Activated T-helper 1 cell treated with anti-CD3 and anti-CD28 coated beads, Interleukin-12 subunit alpha, Interleukin-12 subunit beta, Interleukin-2, Interleukin-4 antibody, amounts not matched to agents 30 ng/mL and 10 ng/mL and 1 ng/mL, durations not matched to agents 14 hours and 24 hours and 36 hours (primary cell): ENCODE measurements at regions of chr1 and their contacts with region 1.

Region 1: GRCh38 chr1:109213785-109214468 is at the start of gene SARS1:
- DNase-seq: peak; percentile 88
- H3K4me3 Mint-ChIP-seq: peak within 1 kb of the TSS; percentile 94
- H3K27ac Mint-ChIP-seq: peak within 1 kb of the TSS; percentile 94
- H3K4me1 Mint-ChIP-seq: peaks cover 37% of the 10 kb centered on the region
- H3K27me3 Mint-ChIP-seq: peaks cover 3% of the 10 kb centered on the region
- total RNA-seq, gene SARS1: 147 and 154 TPM in 2 replicates

Region 2: DNA sequence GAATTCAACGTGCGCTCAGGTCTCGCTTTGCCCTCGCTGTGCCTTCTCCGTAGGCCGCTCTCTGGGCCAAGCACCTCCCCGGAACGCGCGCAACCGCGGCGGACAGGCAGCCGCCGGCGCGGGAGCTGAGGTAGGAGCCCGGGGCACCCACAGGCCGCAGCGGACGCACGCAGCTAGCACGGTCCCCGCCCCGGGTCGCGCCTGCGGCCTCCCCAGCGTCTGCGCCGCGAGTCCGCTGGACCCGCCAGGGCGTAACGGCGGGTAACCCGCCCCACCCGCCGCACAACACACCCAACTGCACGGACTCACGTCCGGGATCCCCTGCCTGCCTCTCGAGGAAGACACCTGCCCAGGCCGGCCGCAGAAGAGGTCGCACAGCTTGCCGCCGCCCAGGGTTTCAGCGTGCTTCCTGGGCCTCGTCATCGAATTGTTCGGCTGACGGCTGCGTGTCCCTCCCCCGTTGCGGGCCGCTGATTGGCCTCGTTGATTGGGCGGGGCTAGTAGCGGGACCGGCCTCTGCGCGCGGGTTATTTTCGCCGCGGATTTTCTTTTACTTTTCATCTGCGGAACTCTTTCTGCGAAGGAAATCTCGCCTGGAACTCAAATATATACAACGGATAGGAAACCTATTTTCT is 250.8 kb before region 1 on chr1 and contains the start of gene CLCC1:
- intact Hi-C with region 1: loop called (anchors 1 kb)
- DNase-seq: peak; percentile 93
- H3K4me3 Mint-ChIP-seq: peak within 1 kb of the TSS; percentile 89
- H3K27ac Mint-ChIP-seq: peak within 1 kb of the TSS; percentile 94
- H3K4me1 Mint-ChIP-seq: peaks cover 26% of the 10 kb centered on the region
- H3K27me3 Mint-ChIP-seq: peaks cover 4% of the 10 kb centered on the region
- total RNA-seq, gene CLCC1: 23.1 and 23.4 TPM in 2 replicates

Region 3: DNA sequence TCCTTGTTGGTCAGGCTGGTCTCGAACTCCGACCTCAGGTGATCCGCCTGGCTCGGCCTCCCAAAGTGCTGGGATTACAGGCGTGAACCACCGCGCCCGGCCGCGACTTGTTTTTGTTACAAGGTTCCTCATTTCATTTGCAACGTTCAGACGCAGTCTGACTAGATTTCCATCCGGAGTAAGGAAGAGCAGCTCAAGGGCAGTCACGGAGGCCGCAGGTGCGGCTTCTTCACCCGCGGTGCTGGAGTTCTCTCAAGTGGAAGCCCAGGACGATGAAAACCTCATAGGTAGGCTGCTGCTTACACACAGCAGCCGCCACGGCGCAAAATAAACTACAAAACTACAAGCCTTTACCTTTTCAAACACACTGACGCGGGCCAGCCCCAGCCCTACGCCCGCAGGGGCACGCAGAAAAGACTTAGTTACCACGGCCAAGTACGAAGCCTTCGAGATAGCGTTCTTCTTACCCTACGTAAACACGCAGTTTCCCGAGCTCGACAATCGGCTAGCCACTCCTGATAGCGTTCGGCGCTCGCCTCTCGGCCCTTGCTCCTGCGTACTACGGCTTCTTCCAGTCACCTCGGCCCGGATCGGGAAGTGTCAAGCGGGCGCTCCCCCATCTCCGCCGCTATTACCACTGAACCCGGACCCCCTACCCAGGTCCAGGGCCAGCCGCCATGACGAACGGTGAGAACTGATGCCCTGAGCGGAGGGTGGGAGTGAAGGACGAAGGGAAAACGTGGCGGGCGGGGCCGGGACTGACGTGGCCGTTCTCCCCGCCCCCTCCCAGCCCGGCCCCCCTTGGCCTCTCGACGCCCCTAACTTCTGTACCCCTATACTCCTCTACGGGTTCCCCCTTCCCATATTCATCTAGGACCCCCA is 123.5 kb before region 1 on chr1 and contains the start of gene TMEM167B:
- intact Hi-C with region 1: loop called (anchors 1 kb)
- DNase-seq: peak; percentile 84
- H3K4me3 Mint-ChIP-seq: peak within 1 kb of the TSS; percentile 92
- H3K27ac Mint-ChIP-seq: peak within 1 kb of the TSS; percentile 93
- H3K4me1 Mint-ChIP-seq: peaks cover 21% of the 10 kb centered on the region
- H3K27me3 Mint-ChIP-seq: peaks cover 2% of the 10 kb centered on the region
- total RNA-seq, gene TMEM167B: 26.2 and 27.6 TPM in 2 replicates

Region 4: GRCh38 chr1:109161858-109162606 is 51.9 kb before region 1 on chr1:
- intact Hi-C with region 1: loop called (anchors 1 kb)
- DNase-seq: peak; percentile 52
- H3K4me3 Mint-ChIP-seq: peak overlapping the region; percentile 47
- H3K27ac Mint-ChIP-seq: peak overlapping the region; percentile 71
- H3K4me1 Mint-ChIP-seq: peaks cover 30% of the 10 kb centered on the region
- H3K27me3 Mint-ChIP-seq: peaks cover 2% of the 10 kb centered on the region

Region 5: DNA sequence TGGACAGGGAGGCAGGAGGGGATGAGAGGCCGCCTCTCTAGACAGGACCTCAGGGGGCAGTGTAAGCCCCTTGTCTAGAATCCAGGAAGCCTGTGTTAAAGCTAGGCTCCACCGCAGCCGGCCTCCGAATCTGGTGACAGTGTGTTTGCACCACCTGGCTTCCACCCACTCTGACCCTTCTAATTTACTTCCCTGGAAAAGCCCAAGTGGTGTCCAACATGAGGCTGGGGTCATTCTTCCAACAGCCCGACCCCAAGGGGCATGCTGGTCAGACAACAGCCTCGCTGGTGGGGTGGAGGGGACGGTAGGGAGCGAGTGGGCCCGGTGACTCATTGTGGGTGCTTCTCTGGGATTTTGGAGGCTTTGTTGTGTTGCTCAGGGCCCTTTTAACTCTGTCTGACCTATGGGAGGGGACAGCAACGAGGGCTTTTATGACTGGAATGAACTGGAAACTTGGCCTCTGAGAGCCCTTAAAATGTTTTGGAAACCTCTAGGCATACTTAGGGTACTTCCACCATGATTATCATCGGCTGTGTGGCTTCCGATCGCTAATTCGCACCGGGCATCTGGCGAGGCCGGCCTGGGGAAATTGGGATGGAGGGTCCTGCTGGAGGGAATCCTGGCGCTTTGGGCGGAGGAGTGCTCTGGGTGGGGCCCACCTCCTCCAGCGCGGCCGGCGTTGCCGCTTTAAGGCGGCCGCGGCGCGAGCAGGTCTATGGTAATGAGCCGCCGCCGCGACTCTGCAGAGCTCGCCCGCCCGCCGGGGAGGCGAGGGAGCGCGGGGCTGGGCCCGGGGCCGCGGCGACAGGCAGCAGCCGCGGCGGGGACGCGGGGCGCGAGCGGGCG is 35.1 kb after region 1 on chr1 and contains the start of gene CELSR2:
- intact Hi-C with region 1: loop called (anchors 5 kb)
- DNase-seq: peak; percentile 67
- H3K4me3 Mint-ChIP-seq: peak within 1 kb of the TSS; percentile 72
- H3K27ac Mint-ChIP-seq: no peak within 1 kb of the TSS
- H3K4me1 Mint-ChIP-seq: peaks cover 6% of the 10 kb centered on the region
- H3K27me3 Mint-ChIP-seq: peaks cover 14% of the 10 kb centered on the region
- total RNA-seq, gene CELSR2: 4.1 and 4.9 TPM in 2 replicates

Region 6: DNA sequence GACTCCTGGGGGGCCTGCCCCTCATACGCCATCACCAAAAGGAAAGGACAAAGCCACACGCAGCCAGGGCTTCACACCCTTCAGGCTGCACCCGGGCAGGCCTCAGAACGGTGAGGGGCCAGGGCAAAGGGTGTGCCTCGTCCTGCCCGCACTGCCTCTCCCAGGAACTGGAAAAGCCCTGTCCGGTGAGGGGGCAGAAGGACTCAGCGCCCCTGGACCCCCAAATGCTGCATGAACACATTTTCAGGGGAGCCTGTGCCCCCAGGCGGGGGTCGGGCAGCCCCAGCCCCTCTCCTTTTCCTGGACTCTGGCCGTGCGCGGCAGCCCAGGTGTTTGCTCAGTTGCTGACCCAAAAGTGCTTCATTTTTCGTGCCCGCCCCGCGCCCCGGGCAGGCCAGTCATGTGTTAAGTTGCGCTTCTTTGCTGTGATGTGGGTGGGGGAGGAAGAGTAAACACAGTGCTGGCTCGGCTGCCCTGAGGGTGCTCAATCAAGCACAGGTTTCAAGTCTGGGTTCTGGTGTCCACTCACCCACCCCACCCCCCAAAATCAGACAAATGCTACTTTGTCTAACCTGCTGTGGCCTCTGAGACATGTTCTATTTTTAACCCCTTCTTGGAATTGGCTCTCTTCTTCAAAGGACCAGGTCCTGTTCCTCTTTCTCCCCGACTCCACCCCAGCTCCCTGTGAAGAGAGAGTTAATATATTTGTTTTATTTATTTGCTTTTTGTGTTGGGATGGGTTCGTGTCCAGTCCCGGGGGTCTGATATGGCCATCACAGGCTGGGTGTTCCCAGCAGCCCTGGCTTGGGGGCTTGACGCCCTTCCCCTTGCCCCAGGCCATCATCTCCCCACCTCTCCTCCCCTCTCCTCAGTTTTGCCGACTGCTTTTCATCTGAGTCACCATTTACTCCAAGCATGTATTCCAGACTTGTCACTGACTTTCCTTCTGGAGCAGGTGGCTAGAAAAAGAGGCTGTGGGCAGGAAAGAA is 60.9 kb after region 1 on chr1:
- intact Hi-C with region 1: no loop called
- DNase-seq: no peak
- H3K4me3 Mint-ChIP-seq: no peak overlapping the region
- H3K27ac Mint-ChIP-seq: no peak overlapping the region
- H3K4me1 Mint-ChIP-seq: no peaks in the 10 kb centered on the region
- H3K27me3 Mint-ChIP-seq: no peaks in the 10 kb centered on the region

Region 7: GRCh38 chr1:109341944-109342930 is 128.3 kb after region 1 on chr1:
- intact Hi-C with region 1: no loop called
- DNase-seq: no peak
- H3K4me3 Mint-ChIP-seq: no peak overlapping the region
- H3K27ac Mint-ChIP-seq: no peak overlapping the region
- H3K4me1 Mint-ChIP-seq: peaks cover 6% of the 10 kb centered on the region
- H3K27me3 Mint-ChIP-seq: peaks cover 11% of the 10 kb centered on the region

Region 8: DNA sequence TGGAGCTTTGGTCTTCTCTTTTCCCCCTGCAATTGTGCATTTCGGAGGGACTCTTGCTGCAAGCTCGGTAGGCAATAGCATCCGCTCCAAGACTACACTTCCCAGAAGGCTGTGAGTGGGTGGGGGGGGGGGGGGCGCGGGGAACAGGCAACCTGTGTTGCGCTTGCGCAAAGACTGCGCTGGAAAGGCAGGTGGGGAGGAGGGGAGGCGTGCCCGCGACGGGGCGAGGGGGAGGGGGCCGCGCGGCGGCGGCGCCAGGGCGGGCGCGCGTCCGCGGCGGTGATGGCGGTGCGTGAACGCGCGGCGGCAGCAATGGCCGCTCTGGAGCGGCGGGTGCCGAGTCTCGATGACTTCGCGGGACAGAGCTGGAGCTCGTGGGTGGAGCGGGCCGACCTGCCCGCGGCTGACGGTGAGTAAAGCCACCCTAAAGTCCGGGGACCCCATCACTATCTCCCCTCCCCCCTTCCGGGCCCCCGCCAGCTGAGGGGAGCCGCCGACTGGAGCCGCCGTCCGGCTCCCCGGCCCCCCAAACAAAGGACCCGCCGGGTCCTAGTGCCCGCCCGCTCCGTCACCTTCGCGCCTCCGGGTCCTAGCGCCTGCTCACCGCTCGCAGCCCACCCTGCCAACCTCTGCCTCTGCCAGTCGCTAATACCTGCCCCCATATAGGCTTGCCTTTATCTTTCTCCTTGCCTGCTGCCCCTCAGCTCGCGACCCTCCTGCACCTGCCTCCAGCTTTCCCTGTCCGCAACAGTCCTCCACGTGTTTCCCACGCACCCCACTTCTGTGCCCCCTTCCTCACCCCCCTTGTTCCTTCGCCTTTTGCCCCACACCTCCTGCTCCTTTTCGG is 270.0 kb after region 1 on chr1 and contains the start of gene ATXN7L2:
- intact Hi-C with region 1: loop called (anchors 5 kb)
- DNase-seq: peak; percentile 87
- H3K4me3 Mint-ChIP-seq: peak within 1 kb of the TSS; percentile 95
- H3K27ac Mint-ChIP-seq: peak within 1 kb of the TSS; percentile 96
- H3K4me1 Mint-ChIP-seq: peaks cover 35% of the 10 kb centered on the region
- H3K27me3 Mint-ChIP-seq: peaks cover 13% of the 10 kb centered on the region
- total RNA-seq, gene ATXN7L2: 17.4 and 18.0 TPM in 2 replicates